PC-3 (cell line): ENCODE measurements at regions of chr10 and their contacts with region 1.

Region 1: DNA sequence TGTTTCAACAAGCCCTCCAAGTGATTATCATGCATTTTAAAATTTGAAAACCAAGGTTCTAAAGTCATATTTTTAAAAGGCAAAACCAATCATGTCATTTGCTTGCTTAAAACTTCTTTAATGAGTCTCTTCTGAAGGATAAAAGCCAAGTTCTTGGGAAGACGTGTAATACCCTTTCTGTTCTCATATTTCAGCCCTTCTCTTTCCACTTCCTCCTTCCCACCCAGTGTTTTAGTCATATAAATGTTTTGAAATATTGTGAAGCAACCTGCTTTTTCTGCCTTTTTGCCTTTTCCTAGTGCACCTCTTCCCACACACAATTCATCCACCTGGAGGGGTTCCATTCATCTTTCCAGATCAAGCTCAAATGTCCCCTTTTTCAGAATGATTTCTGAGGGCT is 211.1 kb upstream of the LRRTM3 start:
- DNase-seq: peak; percentile 46
- ATAC-seq: peak; percentile 59
- H3K4me3 ChIP-seq: no peak overlapping the region
- H3K27ac ChIP-seq: no peak overlapping the region
- H3K4me1 ChIP-seq: peaks cover 7% of the 10 kb centered on the region; the same call in 1 of the 2 replicates
- H3K27me3 ChIP-seq: no peaks in the 10 kb centered on the region
- CTCF ChIP-seq: no peak

Region 2: GRCh38 chr10:66651308-66652082 is 63.2 kb before region 1 on chr10:
- CTCF ChIA-PET with region 1: no interaction called
- POLR2A ChIA-PET with region 1: no interaction called
- intact Hi-C with region 1: no loop called
- DNase-seq: no peak
- ATAC-seq: no peak
- H3K4me3 ChIP-seq: no peak overlapping the region
- H3K27ac ChIP-seq: no peak overlapping the region
- H3K4me1 ChIP-seq: no peaks in the 10 kb centered on the region
- H3K27me3 ChIP-seq: no peaks in the 10 kb centered on the region
- CTCF ChIP-seq: no peak

Region 3: DNA sequence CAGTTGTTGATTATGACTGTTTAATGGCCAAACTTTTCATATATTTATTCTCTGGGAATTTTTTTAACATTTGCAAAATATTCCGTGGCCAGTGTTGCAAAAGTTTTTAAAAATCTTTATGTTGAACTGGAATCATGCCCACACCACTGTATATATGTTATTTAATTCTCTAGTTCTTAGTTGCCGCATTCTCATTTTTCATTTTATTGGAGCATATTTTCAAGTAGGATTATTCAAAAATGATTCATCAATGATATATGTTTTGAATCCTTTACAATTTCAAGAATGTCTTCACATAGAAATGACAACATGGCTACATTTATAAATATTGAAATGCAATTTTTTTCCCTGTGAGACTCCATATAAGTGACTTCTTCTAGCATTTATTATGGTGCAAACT is 22.5 kb after region 1 on chr10:
- CTCF ChIA-PET with region 1: no interaction called
- POLR2A ChIA-PET with region 1: no interaction called
- intact Hi-C with region 1: loop called (anchors 2 kb)
- DNase-seq: peak; percentile 42
- ATAC-seq: no peak
- H3K4me3 ChIP-seq: no peak overlapping the region
- H3K27ac ChIP-seq: no peak overlapping the region
- H3K4me1 ChIP-seq: peaks cover 6% of the 10 kb centered on the region
- H3K27me3 ChIP-seq: no peaks in the 10 kb centered on the region
- CTCF ChIP-seq: no peak